CD4-positive, alpha-beta memory T cell (primary cell): ENCODE measurements at regions of chr22 and their contacts with region 1.

Region 1: GRCh38 chr22:23786752-23787599 is at the start of gene SMARCB1:
- DNase-seq: peak; percentile 86 to 89 (median 86)
- H3K4me3 ChIP-seq: peak within 1 kb of the TSS; percentile 55
- H3K4me3 Mint-ChIP-seq: peak within 1 kb of the TSS; percentile 89 to 96 (median 91)
- H3K27ac ChIP-seq: peak within 1 kb of the TSS; percentile 98
- H3K27ac Mint-ChIP-seq: peak within 1 kb of the TSS; percentile 93 to 97 (median 95)
- H3K4me1 ChIP-seq: peaks cover 34% of the 10 kb centered on the region
- H3K4me1 Mint-ChIP-seq: peaks cover 16 to 45% (median 32%) of the 10 kb centered on the region in 4 donors
- H3K27me3 ChIP-seq: no peaks in the 10 kb centered on the region
- H3K27me3 Mint-ChIP-seq: no peaks in the 10 kb centered on the region
- total RNA-seq, gene SMARCB1: 41.2 to 42.3 TPM

Region 2: GRCh38 chr22:23655891-23656475 is 131.0 kb before region 1 on chr22:
- CTCF ChIA-PET with region 1: no interaction called
- POLR2A ChIA-PET with region 1: no interaction called
- intact Hi-C with region 1: no loop called
- DNase-seq: no peak
- H3K4me3 ChIP-seq: no peak overlapping the region
- H3K4me3 Mint-ChIP-seq: no peak overlapping the region
- H3K27ac ChIP-seq: no peak overlapping the region
- H3K27ac Mint-ChIP-seq: peak overlapping the region in 2 of 7 donors; percentile 11 to 52
- H3K4me1 ChIP-seq: no peaks in the 10 kb centered on the region
- H3K4me1 Mint-ChIP-seq: peaks cover 0 to 2% (median 0%) of the 10 kb centered on the region in 4 donors
- H3K27me3 ChIP-seq: no peaks in the 10 kb centered on the region
- H3K27me3 Mint-ChIP-seq: no peaks in the 10 kb centered on the region

Region 3: GRCh38 chr22:23716811-23717801 is 69.9 kb before region 1 on chr22:
- CTCF ChIA-PET with region 1: no interaction called
- POLR2A ChIA-PET with region 1: interaction called, 3 read pairs
- intact Hi-C with region 1: loop called (anchors 5 kb)
- DNase-seq: peak; percentile 77 to 83 (median 81)
- H3K4me3 ChIP-seq: peak overlapping the region; percentile 62 to 69
- H3K4me3 Mint-ChIP-seq: peak overlapping the region; percentile 73 to 87 (median 84)
- H3K27ac ChIP-seq: peak overlapping the region; percentile 77
- H3K27ac Mint-ChIP-seq: peak overlapping the region; percentile 60 to 93 (median 87)
- H3K4me1 ChIP-seq: peaks cover 21% of the 10 kb centered on the region
- H3K4me1 Mint-ChIP-seq: peaks cover 7 to 28% (median 13%) of the 10 kb centered on the region in 4 donors
- H3K27me3 ChIP-seq: no peaks in the 10 kb centered on the region
- H3K27me3 Mint-ChIP-seq: no peaks in the 10 kb centered on the region

Region 4: GRCh38 chr22:23750714-23751440 is 36.1 kb before region 1 on chr22 and contains the start of gene ZNF70:
- CTCF ChIA-PET with region 1: no interaction called
- POLR2A ChIA-PET with region 1: interaction called, 15 read pairs
- intact Hi-C with region 1: loop called (anchors 1 kb)
- DNase-seq: peak; percentile 83 to 88 (median 86)
- H3K4me3 ChIP-seq: peak within 1 kb of the TSS; percentile 73 to 82
- H3K4me3 Mint-ChIP-seq: peak within 1 kb of the TSS; percentile 76 to 85 (median 80)
- H3K27ac ChIP-seq: peak within 1 kb of the TSS; percentile 67
- H3K27ac Mint-ChIP-seq: peak within 1 kb of the TSS; percentile 69 to 87 (median 78)
- H3K4me1 ChIP-seq: peaks cover 13% of the 10 kb centered on the region
- H3K4me1 Mint-ChIP-seq: peaks cover 7 to 21% (median 12%) of the 10 kb centered on the region in 4 donors
- H3K27me3 ChIP-seq: no peaks in the 10 kb centered on the region
- H3K27me3 Mint-ChIP-seq: no peaks in the 10 kb centered on the region
- total RNA-seq, gene ZNF70: 6.4 to 7.4 TPM

Region 5: DNA sequence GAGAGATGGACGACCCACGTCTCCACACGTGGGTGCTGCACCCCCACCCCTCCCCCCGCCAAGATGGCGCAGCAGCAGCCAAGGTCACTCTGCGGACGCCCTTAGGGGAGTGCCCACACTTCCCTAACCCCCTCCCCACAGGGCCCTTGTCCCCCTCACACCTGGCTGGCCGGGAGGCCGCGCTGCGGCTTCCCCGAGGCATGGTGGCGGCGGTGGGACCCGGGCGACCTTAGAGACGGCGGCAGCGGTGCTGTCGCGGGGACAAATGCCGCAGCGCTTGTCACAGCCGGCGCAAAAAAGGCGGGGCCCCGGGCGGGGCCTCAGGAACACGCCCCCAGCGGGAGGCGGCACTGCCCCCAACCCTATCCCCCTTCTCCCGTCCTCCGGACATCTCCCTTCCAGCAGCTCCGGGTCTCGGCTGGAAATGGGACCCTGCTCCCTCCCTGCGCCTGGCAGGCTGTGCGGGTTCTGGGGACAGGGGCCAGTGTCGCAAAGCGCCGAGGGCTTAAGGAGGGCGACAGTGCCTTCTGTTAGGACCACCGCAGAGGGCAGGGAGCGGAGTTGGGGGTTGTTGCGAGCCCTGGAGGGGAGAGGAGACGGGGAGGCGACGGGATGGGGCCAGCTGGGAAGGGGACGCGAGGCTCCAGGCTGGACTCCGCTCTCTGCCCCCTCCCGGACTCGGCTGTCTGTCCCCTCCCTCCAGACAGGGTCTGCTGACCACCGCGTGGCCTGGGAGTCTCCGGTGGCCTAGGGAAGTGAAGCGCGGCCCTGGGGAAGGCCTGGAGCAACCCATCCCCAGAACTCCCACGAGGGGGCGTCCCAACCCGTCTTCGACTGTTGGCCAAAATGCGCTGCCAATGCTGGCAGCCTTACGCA is 19.1 kb before region 1 on chr22 and contains the start of gene CHCHD10:
- CTCF ChIA-PET with region 1: interaction called, 6 read pairs
- POLR2A ChIA-PET with region 1: interaction called, 12 read pairs
- intact Hi-C with region 1: loop called (anchors 1 kb)
- DNase-seq: peak; percentile 70 to 76 (median 73)
- H3K4me3 ChIP-seq: peak within 1 kb of the TSS; percentile 65 to 82
- H3K4me3 Mint-ChIP-seq: peak within 1 kb of the TSS; percentile 77 to 90 (median 84)
- H3K27ac ChIP-seq: peak within 1 kb of the TSS; percentile 63
- H3K27ac Mint-ChIP-seq: peak within 1 kb of the TSS in 6 of 7 donors; percentile 9 to 88 (median 49)
- H3K4me1 ChIP-seq: peaks cover 44% of the 10 kb centered on the region
- H3K4me1 Mint-ChIP-seq: peaks cover 7 to 45% (median 28%) of the 10 kb centered on the region in 4 donors
- H3K27me3 ChIP-seq: no peaks in the 10 kb centered on the region
- H3K27me3 Mint-ChIP-seq: no peaks in the 10 kb centered on the region
- total RNA-seq, gene CHCHD10: 44.7 to 45.9 TPM

Region 6: DNA sequence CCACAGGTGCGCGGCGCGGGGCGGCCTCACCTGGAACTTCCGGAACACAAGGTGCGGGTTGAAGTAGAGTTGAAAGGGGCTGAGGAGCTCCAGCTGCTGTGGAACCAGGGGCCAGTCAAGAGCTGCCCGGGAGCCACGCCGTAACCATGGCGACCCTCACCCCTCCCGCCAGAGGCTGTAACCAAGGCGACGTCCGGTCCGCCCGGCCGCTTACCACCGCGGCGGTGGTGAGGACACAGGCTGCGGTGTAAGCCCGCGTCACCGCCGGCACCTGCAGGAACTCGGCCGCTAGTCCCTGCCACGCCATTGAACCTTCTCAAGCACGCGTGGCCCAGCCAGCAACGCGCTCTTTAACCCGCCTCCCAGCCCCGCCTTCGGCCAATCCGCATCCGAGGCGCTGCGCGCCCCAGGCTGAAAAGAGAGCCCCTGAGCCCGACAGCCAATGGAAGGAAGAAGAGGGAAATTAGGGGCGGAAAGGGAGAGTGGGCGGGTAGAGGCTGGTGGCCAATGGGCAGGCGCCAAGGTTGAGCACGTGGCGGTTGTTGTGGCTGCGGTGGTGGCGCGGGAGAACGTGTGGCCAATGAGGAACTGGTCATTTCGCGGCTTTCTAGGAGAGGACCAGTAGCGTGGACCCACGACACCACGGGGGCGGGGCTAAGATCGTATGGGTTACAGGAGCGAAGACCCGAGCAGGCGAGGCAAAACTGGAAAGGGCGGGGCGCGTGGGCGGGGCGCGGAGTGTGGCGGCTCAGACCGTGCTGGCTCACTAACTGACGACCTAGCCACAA is 51.9 kb after region 1 on chr22 and contains the start of gene DERL3:
- CTCF ChIA-PET with region 1: no interaction called
- POLR2A ChIA-PET with region 1: no interaction called
- intact Hi-C with region 1: loop called (anchors 1 kb)
- DNase-seq: peak; percentile 93 to 96 (median 95)
- H3K4me3 ChIP-seq: peak within 1 kb of the TSS in 1 of 2 donors; percentile 83
- H3K4me3 Mint-ChIP-seq: peak within 1 kb of the TSS; percentile 85 to 96 (median 91)
- H3K27ac ChIP-seq: peak within 1 kb of the TSS; percentile 24
- H3K27ac Mint-ChIP-seq: peak within 1 kb of the TSS; percentile 83 to 97 (median 93)
- H3K4me1 ChIP-seq: peaks cover 14% of the 10 kb centered on the region
- H3K4me1 Mint-ChIP-seq: peaks cover 14 to 30% (median 20%) of the 10 kb centered on the region in 4 donors
- H3K27me3 ChIP-seq: no peaks in the 10 kb centered on the region
- H3K27me3 Mint-ChIP-seq: no peaks in the 10 kb centered on the region
- total RNA-seq, gene DERL3: 1.9 to 2.9 TPM

Region 7: GRCh38 chr22:23913661-23914353 is 126.8 kb after region 1 on chr22:
- CTCF ChIA-PET with region 1: no interaction called
- POLR2A ChIA-PET with region 1: interaction called, 5 read pairs
- intact Hi-C with region 1: loop called (anchors 1 kb)
- DNase-seq: peak; percentile 96 to 99 (median 97)
- H3K4me3 ChIP-seq: peak overlapping the region; percentile 57 to 86
- H3K4me3 Mint-ChIP-seq: peak overlapping the region; percentile 91 to 99 (median 96)
- H3K27ac ChIP-seq: peak overlapping the region; percentile 79
- H3K27ac Mint-ChIP-seq: peak overlapping the region; percentile 88 to 98 (median 96)
- H3K4me1 ChIP-seq: peaks cover 7% of the 10 kb centered on the region
- H3K4me1 Mint-ChIP-seq: peaks cover 9 to 25% (median 15%) of the 10 kb centered on the region in 4 donors
- H3K27me3 ChIP-seq: no peaks in the 10 kb centered on the region
- H3K27me3 Mint-ChIP-seq: no peaks in the 10 kb centered on the region

Region 8: DNA sequence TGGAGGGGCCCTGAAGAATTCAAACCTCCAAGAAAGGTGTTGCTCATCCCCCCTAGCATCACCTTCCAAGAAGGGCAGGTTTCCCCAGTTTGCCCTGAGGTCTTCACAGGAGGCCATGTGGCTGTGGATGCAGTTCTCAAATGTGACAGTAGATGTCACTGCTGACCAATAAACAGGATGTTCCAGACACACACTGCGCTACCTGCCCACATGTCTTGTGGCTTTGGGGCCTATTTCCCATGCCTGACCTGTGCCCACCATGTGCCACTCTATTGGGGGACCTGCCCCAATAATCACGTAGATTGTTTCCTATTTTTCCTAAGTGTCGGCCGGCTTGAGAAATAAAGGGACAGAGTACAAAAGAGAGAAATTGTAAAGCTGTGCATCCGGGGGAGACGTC is 197.5 kb after region 1 on chr22:
- CTCF ChIA-PET with region 1: no interaction called
- POLR2A ChIA-PET with region 1: no interaction called
- intact Hi-C with region 1: no loop called
- DNase-seq: peak in 4 of 5 donors; percentile 27 to 66 (median 46)
- H3K4me3 ChIP-seq: no peak overlapping the region
- H3K4me3 Mint-ChIP-seq: no peak overlapping the region
- H3K27ac ChIP-seq: no peak overlapping the region
- H3K27ac Mint-ChIP-seq: no peak overlapping the region
- H3K4me1 ChIP-seq: no peaks in the 10 kb centered on the region
- H3K4me1 Mint-ChIP-seq: peaks cover 0 to 4% (median under 1%) of the 10 kb centered on the region in 4 donors
- H3K27me3 ChIP-seq: no peaks in the 10 kb centered on the region
- H3K27me3 Mint-ChIP-seq: peaks cover 0 to 1% of the 10 kb centered on the region in 2 donors